ENCODE measurements at regions of chr13 and their contacts with region 1.

Region 1: GRCh38 chr13:49996951-49997895 is at the start of gene TRIM13:
- DNase-seq: peak; percentile 76
- CTCF ChIP-seq: peak; percentile 76

Region 2: GRCh38 chr13:49976314-49977258 is 20.6 kb before region 1 on chr13:
- CTCF ChIA-PET with region 1: interaction called, 18 read pairs
- POLR2A ChIA-PET with region 1: no interaction called
- DNase-seq: peak; percentile 74
- CTCF ChIP-seq: peak; percentile 78

Region 3: DNA sequence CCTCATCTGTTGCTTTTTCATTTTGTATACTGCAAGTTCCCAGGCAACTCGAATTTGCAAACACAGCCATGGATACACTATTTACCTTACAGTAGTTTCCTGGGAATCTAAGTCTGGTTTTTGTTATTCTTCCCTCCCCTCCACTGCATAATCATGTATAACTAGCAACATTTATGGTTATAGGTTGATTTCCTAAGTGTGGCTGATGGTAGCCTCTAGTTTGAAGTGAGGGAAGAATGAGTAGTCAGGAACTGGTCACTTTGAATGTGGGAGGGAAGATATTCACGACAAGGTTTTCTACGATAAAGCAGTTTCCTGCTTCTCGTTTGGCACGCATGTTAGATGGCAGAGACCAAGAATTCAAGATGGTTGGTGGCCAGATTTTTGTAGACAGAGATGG is 18.0 kb after region 1 on chr13 and contains the start of gene KCNRG:
- CTCF ChIA-PET with region 1: interaction called, 36 read pairs
- POLR2A ChIA-PET with region 1: interaction called, 4 read pairs
- DNase-seq: no peak
- CTCF ChIP-seq: no peak

Region 4: GRCh38 chr13:50075619-50076097 is 78.4 kb after region 1 on chr13:
- CTCF ChIA-PET with region 1: interaction called, 27 read pairs
- POLR2A ChIA-PET with region 1: interaction called, 4 read pairs
- DNase-seq: no peak
- CTCF ChIP-seq: no peak

Region 5: GRCh38 chr13:50457415-50458393 is 460.5 kb after region 1 on chr13:
- CTCF ChIA-PET with region 1: no interaction called
- POLR2A ChIA-PET with region 1: no interaction called
- DNase-seq: no peak
- CTCF ChIP-seq: no peak

Measured in GM10248 (cell line).